ENCODE measurements at regions of chr2 and their contacts with region 1.

Region 1: GRCh38 chr2:222305516-222306392 is 7.0 kb upstream of the PAX3 start:
- DNase-seq: peak in 2 of 5 donors; percentile 29 to 67
- ATAC-seq: peak in 3 of 4 donors; percentile 29 to 36 (median 36)
- H3K4me3 ChIP-seq: peak overlapping the region; percentile 23 to 65 (median 52)
- H3K27ac ChIP-seq: no peak overlapping the region
- H3K4me1 ChIP-seq: peaks cover 0 to 59% (median 18%) of the 10 kb centered on the region in 12 donors
- H3K27me3 ChIP-seq: peaks cover 84 to 100% (median 100%) of the 10 kb centered on the region in 9 donors
- CTCF ChIP-seq: no peak
- POLR2A ChIP-seq: no peak

Region 2: DNA sequence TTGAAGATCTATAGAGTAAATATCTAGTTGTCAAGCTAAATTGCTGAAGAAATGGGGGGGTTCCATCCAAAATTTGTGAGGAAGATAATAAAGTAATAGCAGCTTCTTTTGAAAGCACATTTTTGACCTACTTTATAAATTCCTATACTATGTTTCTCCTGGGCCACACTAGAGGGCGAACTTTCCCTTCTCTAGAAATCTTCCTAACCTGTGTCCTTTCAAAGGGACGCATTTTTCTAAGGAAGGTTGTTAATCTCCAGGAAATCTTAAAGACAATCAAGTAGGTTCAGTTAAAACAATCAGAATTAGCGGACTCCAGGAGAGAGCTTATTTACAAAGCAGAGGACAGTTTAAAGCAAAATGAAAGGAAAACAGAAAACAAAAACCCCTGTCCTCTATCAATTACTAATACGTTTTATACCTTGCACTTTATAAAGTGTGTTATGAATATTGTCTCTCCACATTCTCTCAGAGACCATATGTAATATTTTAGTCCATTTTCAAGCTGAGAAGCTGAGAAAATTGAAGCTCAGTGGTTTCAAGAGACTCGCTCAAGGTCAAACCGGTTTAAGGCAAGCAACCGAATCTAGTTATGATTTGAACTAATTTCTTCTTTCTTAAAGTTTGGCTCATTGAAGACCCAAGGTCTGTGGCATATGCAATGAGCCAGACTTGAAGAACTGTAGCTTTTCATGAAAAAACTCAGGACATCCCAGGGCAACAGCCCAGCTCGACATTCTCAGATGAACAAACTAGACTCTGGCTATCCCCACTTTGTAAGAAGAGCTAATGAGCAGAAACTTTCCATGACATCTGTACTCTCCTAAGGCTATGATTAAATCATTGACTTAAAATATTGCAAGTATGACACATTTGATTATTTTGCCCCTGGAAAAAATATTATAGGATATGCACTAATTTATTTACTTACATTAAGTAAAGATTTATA is 280.5 kb before region 1 on chr2:
- intact Hi-C with region 1: no loop called
- DNase-seq: no peak
- ATAC-seq: peak in 1 of 4 donors; percentile 62
- H3K4me3 ChIP-seq: peak overlapping the region in 1 of 12 donors; percentile 16
- H3K27ac ChIP-seq: no peak overlapping the region
- H3K4me1 ChIP-seq: no peaks in the 10 kb centered on the region
- H3K27me3 ChIP-seq: peaks cover 0 to 7% (median 0%) of the 10 kb centered on the region in 9 donors
- CTCF ChIP-seq: peak in 11 of 12 donors; percentile 30 to 67 (median 50)
- POLR2A ChIP-seq: no peak

Region 3: GRCh38 chr2:222064286-222064685 is 241.5 kb before region 1 on chr2:
- intact Hi-C with region 1: loop called in 7 of 10 experiments (anchors 10 kb)
- DNase-seq: no peak
- ATAC-seq: no peak
- H3K4me3 ChIP-seq: no peak overlapping the region
- H3K27ac ChIP-seq: no peak overlapping the region
- H3K4me1 ChIP-seq: no peaks in the 10 kb centered on the region
- H3K27me3 ChIP-seq: peaks cover 0 to 21% (median 0%) of the 10 kb centered on the region in 9 donors
- CTCF ChIP-seq: no peak
- POLR2A ChIP-seq: no peak